Heart right ventricle (tissue), 16 donors: ENCODE measurements at regions of chr11 and their contacts with region 1.

Region 1: DNA sequence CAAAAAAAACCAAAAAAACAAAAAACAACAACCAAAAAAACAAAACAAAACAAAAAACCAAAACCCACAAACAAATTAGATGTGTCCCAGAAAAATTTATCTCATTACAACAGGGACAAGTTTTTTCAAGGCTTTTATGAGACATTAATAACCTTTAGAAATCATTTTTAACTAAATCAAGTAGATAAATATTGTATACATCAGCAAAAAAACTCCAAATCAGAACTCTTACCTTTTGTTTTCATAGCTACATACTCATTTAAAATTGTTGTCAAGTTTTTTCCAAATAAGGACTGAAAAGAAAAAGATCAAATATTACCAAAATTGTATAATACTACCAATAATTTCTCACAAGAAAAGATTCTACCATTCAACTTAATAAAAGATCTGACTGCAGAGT is 28.7 kb downstream of the NPAT start:
- DNase-seq: no peak
- ATAC-seq: no peak
- H3K4me3 ChIP-seq: no peak overlapping the region
- H3K27ac ChIP-seq: no peak overlapping the region
- H3K4me1 ChIP-seq: peaks cover 0 to 5% (median 0%) of the 10 kb centered on the region in 9 donors
- H3K27me3 ChIP-seq: no peaks in the 10 kb centered on the region
- CTCF ChIP-seq: no peak

Region 2: DNA sequence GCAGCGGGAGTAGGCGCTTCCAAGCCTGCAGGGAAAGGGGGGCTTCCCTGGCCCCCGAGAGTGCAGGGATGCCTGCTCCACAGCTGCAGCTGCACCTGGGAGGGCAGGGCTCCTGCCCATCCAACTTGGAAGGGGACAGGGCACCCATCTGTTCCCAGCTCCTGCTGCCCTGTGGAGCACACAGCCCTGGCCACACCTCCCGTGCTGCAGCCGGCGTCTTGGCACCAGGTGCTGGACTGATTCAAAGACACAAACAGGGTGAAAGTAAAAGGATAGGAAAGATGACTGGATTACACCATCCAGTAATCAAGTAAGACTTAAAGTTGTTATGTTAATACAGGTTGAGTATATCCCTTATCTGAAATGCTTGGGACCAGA is 13.9 kb after region 1 on chr11:
- intact Hi-C with region 1: loop called in 1 of 10 experiments (anchors 1 kb)
- DNase-seq: no peak
- ATAC-seq: no peak
- H3K4me3 ChIP-seq: no peak overlapping the region
- H3K27ac ChIP-seq: no peak overlapping the region
- H3K4me1 ChIP-seq: no peaks in the 10 kb centered on the region
- H3K27me3 ChIP-seq: no peaks in the 10 kb centered on the region
- CTCF ChIP-seq: no peak

Region 3: GRCh38 chr11:108307751-108308150 is 114.0 kb after region 1 on chr11:
- intact Hi-C with region 1: no loop called
- DNase-seq: no peak
- ATAC-seq: no peak
- H3K4me3 ChIP-seq: no peak overlapping the region
- H3K27ac ChIP-seq: no peak overlapping the region
- H3K4me1 ChIP-seq: no peaks in the 10 kb centered on the region
- H3K27me3 ChIP-seq: no peaks in the 10 kb centered on the region
- CTCF ChIP-seq: no peak